ENCODE measurements at regions of chr16 and their contacts with region 1.

Region 1: DNA sequence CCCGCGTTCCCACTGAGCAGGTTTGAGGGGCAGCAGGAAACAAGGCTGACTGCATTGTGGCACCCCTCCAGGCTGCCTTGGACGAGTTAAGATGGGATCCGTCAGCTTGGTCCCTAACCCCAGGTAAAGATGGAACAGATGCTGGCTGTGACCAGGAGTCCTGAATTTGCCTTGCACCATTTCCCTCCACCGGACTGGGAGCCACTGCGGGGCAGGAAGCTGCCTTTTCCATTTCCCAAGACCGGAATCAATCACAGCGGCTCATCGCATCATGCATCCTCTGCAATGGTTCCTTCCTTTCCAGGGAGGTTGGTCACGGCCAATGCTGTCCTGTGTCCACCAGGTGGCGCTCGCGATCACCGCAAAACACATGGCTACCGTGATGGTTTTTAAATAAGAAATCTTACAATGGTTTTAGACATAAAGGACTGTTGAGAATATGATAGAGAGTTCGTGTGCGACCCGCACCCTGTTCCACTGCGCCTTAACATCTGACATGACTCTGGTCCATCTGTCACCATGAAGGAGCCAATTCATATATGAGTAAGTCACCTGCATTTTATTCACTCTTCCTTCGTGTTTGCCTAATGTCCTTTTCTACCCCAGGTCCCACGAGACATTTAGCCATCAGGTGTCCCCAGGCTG is 6.8 kb upstream of the MEAK7 start:
- DNase-seq: peak; percentile 75
- H3K4me3 Mint-ChIP-seq: no peak overlapping the region
- H3K27ac Mint-ChIP-seq: peak overlapping the region; percentile 74
- H3K4me1 Mint-ChIP-seq: peaks cover 68% of the 10 kb centered on the region
- H3K27me3 Mint-ChIP-seq: no peaks in the 10 kb centered on the region

Region 2: GRCh38 chr16:84406006-84406963 is 105.0 kb before region 1 on chr16:
- intact Hi-C with region 1: no loop called
- DNase-seq: no peak
- H3K4me3 Mint-ChIP-seq: no peak overlapping the region
- H3K27ac Mint-ChIP-seq: no peak overlapping the region
- H3K4me1 Mint-ChIP-seq: peaks cover 2% of the 10 kb centered on the region
- H3K27me3 Mint-ChIP-seq: peaks cover 22% of the 10 kb centered on the region

Region 3: GRCh38 chr16:84484579-84485254 is 26.6 kb before region 1 on chr16:
- intact Hi-C with region 1: no loop called
- DNase-seq: no peak
- H3K4me3 Mint-ChIP-seq: no peak overlapping the region
- H3K27ac Mint-ChIP-seq: no peak overlapping the region
- H3K4me1 Mint-ChIP-seq: no peaks in the 10 kb centered on the region
- H3K27me3 Mint-ChIP-seq: no peaks in the 10 kb centered on the region

Region 4: GRCh38 chr16:84548971-84549844 is 37.9 kb after region 1 on chr16:
- intact Hi-C with region 1: loop called (anchors 1 kb)
- DNase-seq: peak; percentile 56
- H3K4me3 Mint-ChIP-seq: peak overlapping the region; percentile 87
- H3K27ac Mint-ChIP-seq: peak overlapping the region; percentile 98
- H3K4me1 Mint-ChIP-seq: peaks cover 57% of the 10 kb centered on the region
- H3K27me3 Mint-ChIP-seq: no peaks in the 10 kb centered on the region

Region 5: DNA sequence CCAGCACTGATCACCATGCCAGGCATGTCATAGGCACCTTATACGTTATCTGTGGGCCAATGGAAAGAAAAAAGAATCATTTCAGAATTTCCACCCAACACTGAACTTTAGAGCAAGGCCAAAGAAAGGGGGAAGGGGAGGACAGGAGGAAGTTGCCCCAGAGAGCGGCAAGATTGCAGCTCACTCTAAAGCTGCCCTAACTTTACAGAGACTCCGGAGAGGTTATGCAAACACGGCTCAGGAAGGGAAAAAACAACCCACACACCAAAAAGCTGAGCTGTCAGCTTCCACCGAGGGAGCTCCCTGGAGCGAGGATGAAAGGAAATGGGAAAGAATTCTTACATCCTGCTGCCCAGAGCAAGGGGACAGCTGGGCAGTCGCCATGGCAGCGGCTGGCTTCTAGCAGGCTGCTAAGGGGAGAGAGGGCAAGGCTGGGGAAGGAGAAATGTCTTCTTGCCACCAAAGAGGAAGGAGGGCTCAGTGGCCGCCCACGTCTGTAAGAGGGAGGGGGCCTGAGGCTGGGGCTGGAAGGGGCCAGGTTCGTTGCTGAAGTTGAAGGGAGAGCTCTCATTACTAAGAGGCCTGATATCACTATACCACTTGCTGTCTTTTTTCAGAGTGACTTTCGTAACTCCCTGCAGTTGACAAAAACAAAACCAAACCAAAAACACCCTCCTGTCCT is 88.4 kb after region 1 on chr16:
- intact Hi-C with region 1: loop called (anchors 1 kb)
- DNase-seq: peak; percentile 55
- H3K4me3 Mint-ChIP-seq: peak overlapping the region; percentile 78
- H3K27ac Mint-ChIP-seq: peak overlapping the region; percentile 97
- H3K4me1 Mint-ChIP-seq: peaks cover 82% of the 10 kb centered on the region
- H3K27me3 Mint-ChIP-seq: no peaks in the 10 kb centered on the region

Region 6: DNA sequence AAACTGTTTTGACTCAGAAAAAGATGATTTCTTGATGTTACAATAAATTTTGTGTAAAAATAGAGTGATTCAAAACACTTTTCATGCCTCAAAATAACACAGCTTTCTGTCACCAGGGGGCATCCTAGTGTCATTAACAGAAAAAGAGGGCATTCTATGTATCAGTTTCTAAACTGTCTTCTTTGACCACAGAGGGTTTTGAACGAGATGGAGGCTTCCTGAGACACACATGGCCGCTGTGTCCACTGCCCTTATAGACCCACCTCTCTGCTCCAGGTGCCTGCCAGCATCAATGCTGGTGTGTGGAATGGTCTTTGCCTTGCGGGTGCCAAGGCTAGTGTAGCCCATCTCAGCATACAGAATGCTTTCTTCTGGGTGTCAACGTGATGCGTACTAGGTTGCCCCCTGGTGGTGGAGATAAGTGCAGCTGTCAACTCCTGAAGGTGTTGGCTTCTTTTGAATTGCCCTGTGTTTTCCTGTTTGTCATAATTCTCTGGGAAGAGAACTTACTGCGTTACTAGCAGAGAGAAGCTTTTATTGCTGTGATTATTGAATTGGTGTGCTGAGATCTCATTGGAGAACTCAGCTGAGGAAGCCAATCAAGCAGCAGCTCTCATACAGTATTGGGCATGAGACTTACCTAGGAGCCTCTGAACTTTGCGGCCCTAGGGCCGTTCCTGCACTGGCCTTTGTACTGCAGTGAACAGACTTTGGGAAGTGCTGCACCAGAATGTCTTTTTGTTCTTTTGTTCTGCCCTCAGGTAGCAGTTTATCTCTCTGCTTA is 227.1 kb after region 1 on chr16:
- intact Hi-C with region 1: loop called (anchors 5 kb)
- DNase-seq: peak; percentile 66
- H3K4me3 Mint-ChIP-seq: no peak overlapping the region
- H3K27ac Mint-ChIP-seq: no peak overlapping the region
- H3K4me1 Mint-ChIP-seq: peaks cover 46% of the 10 kb centered on the region
- H3K27me3 Mint-ChIP-seq: no peaks in the 10 kb centered on the region

Measured in activated T-helper 2 cell treated with anti-CD3 and anti-CD28 coated beads, Interferon-gamma antibody, Interleukin-2, Interleukin-4, amounts not matched to agents 10 μg/mL and 5 μg/mL and 100 μg/mL, durations not matched to agents 14 hours and 24 hours and 36 hours (primary cell).